ENCODE measurements at regions of chr16 and their contacts with region 1.

Region 1: GRCh38 chr16:9159839-9160550 is 68.6 kb downstream of the HAPSTR1 start:
- DNase-seq: peak; percentile 58 to 72 (median 65)
- ATAC-seq: peak; percentile 95
- H3K4me3 ChIP-seq: no peak overlapping the region
- H3K27ac ChIP-seq: no peak overlapping the region
- H3K4me1 ChIP-seq: no peaks in the 10 kb centered on the region; a peak in 1 of 5 replicates
- H3K27me3 ChIP-seq: peaks cover 22 to 30% of the 10 kb centered on the region in 2 experiments
- CTCF ChIP-seq: peak; percentile 77 to 82 (median 80)
- EP300 ChIP-seq: no peak
- POLR2A ChIP-seq: no peak
- RAD21 ChIP-seq: peak; percentile 31 to 78; a peak in 3 of 4 replicates

Region 2: DNA sequence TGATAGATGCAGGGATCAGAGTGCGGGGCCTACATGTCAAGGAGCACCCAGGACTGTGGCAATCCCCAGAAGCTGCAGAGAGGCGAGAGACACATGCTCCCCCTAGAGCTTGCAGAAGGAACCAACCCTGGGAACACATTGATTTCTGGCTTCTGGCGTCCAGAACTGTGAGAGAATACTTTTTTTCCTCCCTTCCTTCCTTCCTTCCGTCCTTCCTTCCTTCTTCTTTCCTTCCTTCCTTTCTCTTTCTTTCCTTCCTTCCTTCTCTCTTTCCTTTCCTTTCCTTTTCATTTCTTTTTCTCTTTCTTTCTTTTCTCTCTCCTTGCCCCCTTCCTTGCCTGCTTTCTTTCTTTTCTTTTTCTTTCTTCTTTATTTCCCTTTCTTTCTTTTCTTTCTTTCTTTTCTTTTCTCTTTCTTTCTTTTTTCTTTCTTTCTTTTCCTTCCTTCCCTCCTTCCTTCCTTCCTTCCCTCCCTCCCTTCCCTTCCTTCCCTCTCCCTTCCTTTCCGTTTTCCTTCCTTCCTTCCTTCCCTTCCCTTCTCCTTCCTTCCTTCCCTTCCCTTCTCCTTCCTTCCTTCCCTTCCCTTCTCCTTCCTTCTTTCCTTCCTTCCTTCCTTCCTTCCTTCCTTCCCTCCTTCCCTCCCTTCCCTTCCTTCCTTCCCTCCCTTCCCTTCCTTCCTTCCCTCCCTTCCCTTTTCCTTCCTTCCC is 65.8 kb after region 1 on chr16:
- CTCF ChIA-PET with region 1: no interaction called
- POLR2A ChIA-PET with region 1: no interaction called
- in situ Hi-C with region 1: no loop called
- intact Hi-C with region 1: loop called (anchors 5 kb)
- DNase-seq: peak; percentile 21 to 33 (median 27)
- ATAC-seq: peak; percentile 88
- H3K4me3 ChIP-seq: no peak overlapping the region
- H3K27ac ChIP-seq: no peak overlapping the region
- H3K4me1 ChIP-seq: no peaks in the 10 kb centered on the region
- H3K27me3 ChIP-seq: peaks cover 8 to 11% of the 10 kb centered on the region in 2 experiments; a peak in 3 of 5 replicates
- CTCF ChIP-seq: peak; percentile 59 to 63 (median 61)
- EP300 ChIP-seq: no peak
- POLR2A ChIP-seq: no peak
- RAD21 ChIP-seq: peak in 1 of 2 experiments; percentile 50; a peak in 2 of 4 replicates

Region 3: DNA sequence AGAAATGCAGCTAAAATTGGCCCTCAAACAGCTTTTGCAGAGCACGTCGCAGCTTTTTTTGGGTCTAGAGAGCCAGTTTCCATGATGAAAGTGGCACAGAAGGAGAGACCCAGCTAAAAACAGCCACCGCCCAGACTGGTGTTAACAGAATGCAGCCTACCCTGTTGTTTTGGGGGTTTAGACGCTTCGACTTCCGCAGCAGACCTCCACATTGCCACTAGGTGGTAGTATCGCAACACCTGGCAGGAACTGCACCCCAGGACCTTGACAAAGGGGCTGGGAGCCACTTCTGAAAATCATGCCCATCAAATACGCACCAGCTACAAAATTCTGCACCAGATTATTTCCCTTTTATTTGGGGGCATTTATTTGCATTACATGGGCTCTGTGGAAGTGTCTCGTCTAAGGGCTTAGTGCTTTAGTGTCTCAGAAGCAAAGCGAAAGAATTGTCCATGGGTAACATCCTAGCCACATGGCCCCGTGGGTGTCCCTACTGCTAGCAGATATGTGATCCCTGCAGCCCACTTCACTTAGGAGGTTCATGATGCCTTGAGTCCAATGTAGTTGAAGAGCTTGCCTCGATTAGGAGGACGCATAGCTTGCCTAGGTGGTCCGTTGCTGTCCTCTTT is 98.5 kb after region 1 on chr16:
- CTCF ChIA-PET with region 1: no interaction called
- POLR2A ChIA-PET with region 1: no interaction called
- in situ Hi-C with region 1: no loop called
- intact Hi-C with region 1: loop called (anchors 1 kb)
- DNase-seq: peak; percentile 49 to 66 (median 58)
- ATAC-seq: peak; percentile 94
- H3K4me3 ChIP-seq: no peak overlapping the region
- H3K27ac ChIP-seq: no peak overlapping the region
- H3K4me1 ChIP-seq: no peaks in the 10 kb centered on the region
- H3K27me3 ChIP-seq: peaks cover 2 to 12% of the 10 kb centered on the region in 2 experiments; a peak in 3 of 5 replicates
- CTCF ChIP-seq: peak; percentile 80 to 86 (median 83)
- EP300 ChIP-seq: no peak
- POLR2A ChIP-seq: no peak
- RAD21 ChIP-seq: peak; percentile 53 to 84

Measured in K562 (cell line).